ENCODE measurements at regions of chr20 and their contacts with region 1.

Region 1: GRCh38 chr20:35741892-35742740 is at the start of gene RBM39:
- DNase-seq: peak; percentile 100
- ATAC-seq: peak; percentile 93
- H3K4me3 ChIP-seq: peak within 1 kb of the TSS; percentile 86
- H3K27ac ChIP-seq: peak within 1 kb of the TSS; percentile 86
- H3K4me1 ChIP-seq: peaks cover 32% of the 10 kb centered on the region
- H3K27me3 ChIP-seq: no peaks in the 10 kb centered on the region
- CTCF ChIP-seq: peak; percentile 38
- total RNA-seq, gene RBM39: 286 and 341 TPM in 2 replicates

Region 2: GRCh38 chr20:35699127-35699975 is 42.8 kb before region 1 on chr20 and contains the starts of genes NFS1 and ROMO1:
- CTCF ChIA-PET with region 1: no interaction called
- POLR2A ChIA-PET with region 1: interaction called, 10 read pairs
- intact Hi-C with region 1: no loop called
- DNase-seq: peak; percentile 89
- ATAC-seq: peak; percentile 81
- H3K4me3 ChIP-seq: peak within 1 kb of the TSS; percentile 79
- H3K27ac ChIP-seq: peak within 1 kb of the TSS; percentile 72
- H3K4me1 ChIP-seq: peaks cover 20% of the 10 kb centered on the region
- H3K27me3 ChIP-seq: no peaks in the 10 kb centered on the region
- CTCF ChIP-seq: no peak; the same call in 1 of the 2 replicates
- total RNA-seq, gene NFS1: 71.8 and 75.8 TPM in 2 replicates
- total RNA-seq, gene ROMO1: 479 and 530 TPM in 2 replicates

Region 3: DNA sequence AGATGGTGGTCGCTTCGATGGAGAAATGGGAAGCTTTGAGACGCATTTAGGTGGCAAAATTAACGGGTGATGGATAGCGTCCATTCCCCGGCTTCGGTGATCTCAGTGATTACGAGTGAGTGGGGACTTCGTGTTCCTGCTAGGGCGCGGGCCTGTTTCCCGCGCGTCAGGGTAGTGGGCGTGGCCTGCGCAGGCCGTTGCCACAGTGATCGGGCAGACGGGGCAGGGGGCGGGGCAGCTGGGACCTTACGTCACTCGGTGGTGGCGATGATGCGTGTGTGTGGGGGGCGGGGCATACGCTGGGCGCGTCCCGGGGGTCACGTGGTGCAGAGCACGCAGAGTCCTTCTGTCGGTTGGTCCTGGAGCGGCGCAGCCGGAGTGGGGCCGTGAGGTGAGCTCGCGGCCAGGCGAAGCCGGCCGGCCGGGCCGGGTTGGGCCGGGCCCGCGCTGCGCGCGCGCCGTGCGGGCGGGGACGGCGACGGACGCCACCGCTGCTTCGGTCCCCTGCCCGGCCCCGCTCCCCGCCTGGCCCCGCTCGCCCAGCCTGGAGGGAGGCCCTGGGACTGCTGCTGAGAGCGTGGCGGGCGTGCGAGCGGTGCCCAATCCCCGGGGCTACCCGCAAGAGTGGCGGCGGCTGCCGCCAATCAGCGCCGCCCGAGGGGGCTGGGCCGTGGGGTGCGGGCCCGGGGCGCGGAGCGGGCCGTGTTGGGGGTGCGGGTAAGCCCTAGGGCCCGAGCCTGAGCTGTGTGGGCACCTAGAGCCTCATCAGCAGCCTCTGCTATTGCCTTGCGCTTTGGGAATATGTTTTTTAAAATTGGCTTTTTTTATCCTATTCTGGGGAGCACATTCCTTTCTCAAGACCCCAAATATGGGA is 29.8 kb after region 1 on chr20 and contains the start of gene PHF20:
- CTCF ChIA-PET with region 1: no interaction called
- POLR2A ChIA-PET with region 1: interaction called, 19 read pairs
- intact Hi-C with region 1: loop called (anchors 2 kb)
- DNase-seq: peak; percentile 93
- ATAC-seq: peak; percentile 93
- H3K4me3 ChIP-seq: peak within 1 kb of the TSS; percentile 88
- H3K27ac ChIP-seq: no peak within 1 kb of the TSS; the same call in 1 of the 2 replicates
- H3K4me1 ChIP-seq: peaks cover 33% of the 10 kb centered on the region
- H3K27me3 ChIP-seq: no peaks in the 10 kb centered on the region
- CTCF ChIP-seq: no peak
- total RNA-seq, gene PHF20: 37.2 and 56.3 TPM in 2 replicates

Region 4: GRCh38 chr20:35871311-35871771 is 129.2 kb after region 1 on chr20:
- CTCF ChIA-PET with region 1: no interaction called
- POLR2A ChIA-PET with region 1: interaction called, 25 read pairs
- intact Hi-C with region 1: no loop called
- DNase-seq: no peak
- ATAC-seq: no peak
- H3K4me3 ChIP-seq: no peak overlapping the region
- H3K27ac ChIP-seq: no peak overlapping the region
- H3K4me1 ChIP-seq: peaks cover 17% of the 10 kb centered on the region
- H3K27me3 ChIP-seq: no peaks in the 10 kb centered on the region
- CTCF ChIP-seq: no peak

Region 5: GRCh38 chr20:35883778-35884540 is 141.8 kb after region 1 on chr20:
- CTCF ChIA-PET with region 1: interaction called, 10 read pairs
- POLR2A ChIA-PET with region 1: interaction called, 61 read pairs
- intact Hi-C with region 1: loop called (anchors 1 kb)
- DNase-seq: peak; percentile 99
- ATAC-seq: peak; percentile 86
- H3K4me3 ChIP-seq: peak overlapping the region; percentile 39; the same call in 1 of the 2 replicates
- H3K27ac ChIP-seq: peak overlapping the region; percentile 97
- H3K4me1 ChIP-seq: peaks cover 41% of the 10 kb centered on the region
- H3K27me3 ChIP-seq: no peaks in the 10 kb centered on the region
- CTCF ChIP-seq: peak; percentile 92

Region 6: DNA sequence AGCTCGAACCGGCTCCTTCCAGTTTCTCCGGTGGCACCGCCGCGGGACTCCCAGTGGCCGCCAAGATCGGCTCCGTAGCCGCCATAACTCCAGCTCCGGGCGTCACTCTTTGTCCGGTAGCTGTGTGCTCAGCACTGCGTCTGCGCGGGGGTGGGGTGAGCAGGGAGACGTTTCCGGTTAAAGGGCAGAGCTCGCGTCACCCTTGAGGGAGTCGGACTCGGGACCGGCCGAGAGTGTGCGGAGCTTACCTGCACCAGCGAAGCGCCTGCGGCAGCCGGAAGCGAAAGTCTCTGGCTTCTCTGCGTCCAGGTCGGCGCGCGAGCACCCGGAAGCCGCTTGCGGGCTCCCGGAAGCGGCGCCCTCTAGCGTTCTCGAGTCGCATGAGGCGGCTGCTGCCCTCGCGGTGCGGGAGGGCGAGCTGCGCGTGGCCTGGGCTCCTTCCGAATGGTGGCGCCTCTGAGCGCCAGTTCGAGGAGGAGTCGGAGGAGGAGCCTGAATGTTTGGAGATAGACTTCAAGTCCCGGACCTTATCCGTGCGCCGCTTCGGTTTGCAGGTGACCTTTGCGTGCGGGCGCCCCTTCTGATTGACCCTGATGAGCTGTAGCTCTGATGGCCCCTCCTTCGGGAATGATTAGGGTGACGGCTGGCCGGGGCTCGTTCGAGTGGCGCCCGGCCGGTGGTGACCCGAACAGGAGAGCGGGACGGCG is 212.2 kb after region 1 on chr20 and contains the start of gene SCAND1:
- CTCF ChIA-PET with region 1: interaction called, 4 read pairs
- POLR2A ChIA-PET with region 1: interaction called, 27 read pairs
- intact Hi-C with region 1: no loop called
- DNase-seq: peak; percentile 99
- ATAC-seq: peak; percentile 88
- H3K4me3 ChIP-seq: peak within 1 kb of the TSS; percentile 95
- H3K27ac ChIP-seq: peak within 1 kb of the TSS; percentile 93
- H3K4me1 ChIP-seq: peaks cover 13% of the 10 kb centered on the region
- H3K27me3 ChIP-seq: no peaks in the 10 kb centered on the region
- CTCF ChIP-seq: peak; percentile 94
- total RNA-seq, gene SCAND1: 90.9 and 101 TPM in 2 replicates

Measured in PC-3 (cell line).